ENCODE measurements at regions of chr15 and their contacts with region 1.

Region 1: GRCh38 chr15:58785355-58785754 is 14.3 kb downstream of the MINDY2 start:
- DNase-seq: no peak
- ATAC-seq: no peak
- H3K4me3 ChIP-seq: no peak overlapping the region
- H3K27ac ChIP-seq: no peak overlapping the region
- H3K4me1 ChIP-seq: no peaks in the 10 kb centered on the region
- H3K27me3 ChIP-seq: no peaks in the 10 kb centered on the region
- CTCF ChIP-seq: no peak

Region 2: DNA sequence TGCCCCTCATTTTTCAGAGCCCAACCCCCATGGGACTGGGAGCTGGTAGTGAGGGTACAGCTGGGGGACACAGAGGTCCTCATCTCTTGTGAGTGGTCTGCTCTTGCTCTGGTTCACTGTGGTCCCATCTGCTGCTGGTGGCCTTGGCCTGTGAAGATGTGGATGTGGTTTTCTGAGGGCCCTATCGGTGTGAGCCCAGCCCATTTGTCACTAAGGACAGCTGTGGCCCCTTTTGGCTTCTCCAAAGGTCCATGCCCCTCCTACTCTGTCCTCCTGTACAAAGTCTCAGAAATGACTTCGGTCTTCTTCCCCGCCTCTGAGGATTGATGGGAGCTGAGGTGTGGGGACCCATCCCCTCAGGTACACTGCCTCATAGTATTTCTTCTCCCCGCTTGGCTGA is 332.6 kb before region 1 on chr15:
- CTCF ChIA-PET with region 1: no interaction called
- POLR2A ChIA-PET with region 1: interaction called, 17 read pairs
- in situ Hi-C with region 1: no loop called
- intact Hi-C with region 1: no loop called
- DNase-seq: no peak
- ATAC-seq: no peak
- H3K4me3 ChIP-seq: no peak overlapping the region
- H3K27ac ChIP-seq: no peak overlapping the region
- H3K4me1 ChIP-seq: peaks cover 2% of the 10 kb centered on the region; the same call in 1 of the 2 replicates
- H3K27me3 ChIP-seq: no peaks in the 10 kb centered on the region
- CTCF ChIP-seq: no peak

Region 3: GRCh38 chr15:58677426-58677825 is 107.9 kb before region 1 on chr15:
- CTCF ChIA-PET with region 1: no interaction called
- POLR2A ChIA-PET with region 1: interaction called, 11 read pairs
- in situ Hi-C with region 1: no loop called
- intact Hi-C with region 1: no loop called
- DNase-seq: no peak
- ATAC-seq: no peak
- H3K4me3 ChIP-seq: no peak overlapping the region
- H3K27ac ChIP-seq: no peak overlapping the region
- H3K4me1 ChIP-seq: no peaks in the 10 kb centered on the region
- H3K27me3 ChIP-seq: no peaks in the 10 kb centered on the region
- CTCF ChIP-seq: no peak; the same call in 1 of the 2 replicates

Region 4: GRCh38 chr15:58994906-58995453 is 209.6 kb after region 1 on chr15:
- CTCF ChIA-PET with region 1: no interaction called
- POLR2A ChIA-PET with region 1: no interaction called
- in situ Hi-C with region 1: no loop called
- intact Hi-C with region 1: no loop called
- DNase-seq: no peak
- ATAC-seq: no peak
- H3K4me3 ChIP-seq: no peak overlapping the region
- H3K27ac ChIP-seq: no peak overlapping the region
- H3K4me1 ChIP-seq: no peaks in the 10 kb centered on the region; the same call in 1 of the 2 replicates
- H3K27me3 ChIP-seq: no peaks in the 10 kb centered on the region
- CTCF ChIP-seq: no peak

Measured in Panc1 (cell line).